Heart right ventricle (tissue), 16 donors: ENCODE measurements at regions of chr15 and their contacts with region 1.

Region 1: DNA sequence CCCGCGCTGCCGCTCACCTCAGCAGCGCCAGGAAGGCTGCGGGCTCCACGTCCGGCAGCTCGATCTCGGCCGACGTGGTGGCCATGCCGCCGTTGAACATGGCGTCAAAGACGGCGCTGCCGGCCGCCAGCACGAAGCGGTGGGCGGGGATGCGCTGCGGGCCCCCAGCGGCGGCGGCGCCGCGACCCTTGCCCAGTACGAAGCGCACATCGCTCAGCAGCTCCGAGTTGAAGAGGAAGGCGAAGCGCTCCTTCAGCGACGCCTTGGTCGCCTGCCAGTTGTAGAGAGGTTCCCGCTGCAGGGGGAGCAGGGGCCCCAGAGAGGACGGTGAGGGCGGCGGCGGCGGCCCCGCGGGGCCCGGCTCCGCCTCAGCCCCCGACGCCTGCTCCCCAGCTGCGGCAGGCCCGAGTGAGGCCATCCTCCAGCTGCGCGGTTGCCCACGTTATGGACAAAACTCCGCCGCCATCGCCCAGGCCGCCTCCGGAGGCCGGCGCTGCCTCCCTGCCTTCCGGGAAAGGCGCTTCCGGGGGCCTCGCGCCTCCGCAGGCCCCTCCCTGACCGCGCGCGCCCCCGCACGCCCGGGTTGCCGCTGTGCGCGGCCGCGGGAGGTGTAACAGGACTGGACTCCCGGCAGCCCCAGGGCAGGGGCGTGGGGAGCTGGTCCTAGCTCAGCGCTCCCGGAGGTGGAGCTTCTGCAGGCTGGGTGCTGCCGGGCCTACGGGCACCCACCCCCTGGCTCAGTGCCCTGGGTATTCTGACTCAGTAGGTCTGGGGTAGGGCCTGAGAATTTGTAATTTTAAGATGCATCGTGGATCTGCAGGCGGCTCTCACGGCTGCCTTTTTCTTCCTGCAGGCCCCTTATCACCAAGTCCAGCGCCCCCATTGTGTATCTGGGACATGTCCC is at the start of gene BTBD1:
- DNase-seq: peak; percentile 93 to 95
- ATAC-seq: peak; percentile 98 to 99 (median 98)
- H3K4me3 ChIP-seq: peak within 1 kb of the TSS; percentile 72 to 99 (median 90)
- H3K27ac ChIP-seq: peak within 1 kb of the TSS; percentile 94 to 100 (median 96)
- H3K4me1 ChIP-seq: peaks cover 5 to 50% (median 42%) of the 10 kb centered on the region in 9 donors
- H3K27me3 ChIP-seq: no peaks in the 10 kb centered on the region
- CTCF ChIP-seq: peak in 3 of 9 donors; percentile 25 to 38 (median 29)
- total RNA-seq, gene BTBD1: 130 to 185 (median 157) TPM

Region 2: GRCh38 chr15:83108266-83109226 is 41.6 kb after region 1 on chr15:
- intact Hi-C with region 1: loop called in 5 of 10 experiments (anchors 1 to 5 kb)
- DNase-seq: peak; percentile 43 to 51
- ATAC-seq: peak; percentile 61 to 85 (median 76)
- H3K4me3 ChIP-seq: peak overlapping the region in 9 of 10 donors; percentile 47 to 74 (median 64)
- H3K27ac ChIP-seq: peak overlapping the region; percentile 41 to 90 (median 73)
- H3K4me1 ChIP-seq: peaks cover 0 to 59% (median 36%) of the 10 kb centered on the region in 9 donors
- H3K27me3 ChIP-seq: peaks cover 0 to 29% (median 9%) of the 10 kb centered on the region in 7 donors
- CTCF ChIP-seq: no peak

Region 3: DNA sequence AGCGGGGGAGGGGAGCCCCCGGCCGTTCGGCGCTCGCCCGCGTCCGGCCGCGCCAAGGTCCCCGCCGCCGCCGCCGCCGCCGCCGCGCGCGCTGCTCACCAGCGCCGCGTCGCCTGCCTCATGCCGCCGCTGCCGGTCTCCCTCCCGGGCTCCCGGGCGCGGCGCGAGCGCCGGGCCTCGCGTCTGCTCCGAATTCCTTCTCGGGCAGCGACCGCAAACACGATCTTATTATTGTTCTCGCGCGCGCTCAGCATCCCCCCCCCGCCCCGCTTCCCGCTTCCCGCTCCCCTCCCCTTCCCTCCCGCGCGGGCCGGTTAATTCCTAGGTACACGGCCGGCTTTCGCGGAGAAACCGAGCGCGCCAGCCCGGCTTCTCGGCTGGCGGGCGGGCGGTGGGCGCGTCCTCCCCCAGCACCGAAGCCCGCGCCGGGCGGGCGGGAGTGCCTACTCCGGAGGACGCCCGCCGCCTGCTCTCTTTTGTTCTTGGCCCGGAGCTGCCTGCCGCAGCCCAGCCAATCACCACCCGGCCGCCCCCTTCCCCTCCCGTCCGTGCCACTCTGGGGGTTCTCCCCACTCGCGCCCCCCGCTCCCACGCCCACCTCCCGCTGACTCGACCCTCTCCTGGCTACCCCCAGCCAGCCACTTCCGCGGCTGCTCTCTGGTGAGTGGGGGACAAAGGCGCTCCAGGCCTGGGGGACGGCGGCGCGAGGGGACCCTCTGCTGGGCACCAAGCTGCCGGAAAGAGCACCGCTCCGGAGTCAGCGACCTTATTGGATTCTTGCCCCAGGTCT is 140.8 kb after region 1 on chr15 and contains the start of gene HDGFL3:
- intact Hi-C with region 1: loop called in 4 of 10 experiments (anchors 5 to 10 kb)
- DNase-seq: peak; percentile 62 to 79
- ATAC-seq: peak; percentile 46 to 73 (median 58)
- H3K4me3 ChIP-seq: peak within 1 kb of the TSS; percentile 68 to 96 (median 92)
- H3K27ac ChIP-seq: peak within 1 kb of the TSS; percentile 80 to 96 (median 92)
- H3K4me1 ChIP-seq: peaks cover 2 to 44% (median 17%) of the 10 kb centered on the region in 9 donors
- H3K27me3 ChIP-seq: peaks cover 0 to 36% (median 0%) of the 10 kb centered on the region in 7 donors
- CTCF ChIP-seq: peak in 2 of 9 donors; percentile 8 to 35
- total RNA-seq, gene HDGFL3: 25.5 to 43.2 (median 39.0) TPM